Prostate gland (tissue), 2 donors: ENCODE measurements at regions of chr2 and their contacts with region 1.

Region 1: DNA sequence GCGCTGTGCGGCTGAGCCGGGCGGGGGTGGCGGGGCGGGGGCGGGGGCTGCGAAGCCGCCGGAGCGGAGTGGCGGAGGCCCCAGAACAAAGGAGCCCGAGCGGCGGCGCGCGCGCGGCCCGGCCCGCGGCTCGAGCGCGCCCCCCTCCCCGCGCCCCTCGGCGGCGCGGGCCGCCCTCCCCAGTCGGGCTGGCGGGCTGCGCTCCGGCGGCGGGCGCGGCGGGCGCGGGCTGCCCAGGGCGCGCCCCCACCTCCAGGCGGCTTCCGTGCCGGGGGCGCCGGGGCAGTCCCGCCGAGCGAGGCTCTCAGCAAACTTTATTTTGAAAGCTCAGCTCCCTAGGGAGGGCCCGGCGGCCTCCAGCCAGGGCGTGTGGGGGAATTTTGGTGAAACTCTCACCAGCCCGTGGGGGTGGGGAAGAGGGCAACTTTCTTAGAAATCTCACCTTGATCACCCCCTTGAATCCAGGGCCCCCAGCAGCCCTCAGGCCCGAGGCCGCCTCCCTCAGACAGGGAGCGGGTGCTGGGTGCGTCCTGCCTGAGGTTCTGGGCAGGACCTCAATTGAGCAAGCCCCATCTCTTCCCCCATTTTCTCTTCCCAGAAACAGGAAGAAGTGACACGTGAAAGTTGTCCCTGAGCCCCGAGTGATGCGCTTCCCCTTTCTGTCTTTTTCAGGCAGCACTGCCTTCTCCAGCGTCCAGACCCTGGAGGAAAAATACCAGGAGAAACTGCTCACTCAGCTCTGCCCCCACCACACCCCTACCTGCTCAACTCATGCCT is 786 bp downstream of the TET3 start:
- DNase-seq: peak; percentile 22
- H3K4me3 ChIP-seq: peak overlapping the region; percentile 51 to 66
- H3K27ac ChIP-seq: peak overlapping the region; percentile 95 to 97
- H3K4me1 ChIP-seq: peaks cover 25% of the 10 kb centered on the region
- H3K27me3 ChIP-seq: no peaks in the 10 kb centered on the region
- CTCF ChIP-seq: no peak
- POLR2A ChIP-seq: no peak

Region 2: DNA sequence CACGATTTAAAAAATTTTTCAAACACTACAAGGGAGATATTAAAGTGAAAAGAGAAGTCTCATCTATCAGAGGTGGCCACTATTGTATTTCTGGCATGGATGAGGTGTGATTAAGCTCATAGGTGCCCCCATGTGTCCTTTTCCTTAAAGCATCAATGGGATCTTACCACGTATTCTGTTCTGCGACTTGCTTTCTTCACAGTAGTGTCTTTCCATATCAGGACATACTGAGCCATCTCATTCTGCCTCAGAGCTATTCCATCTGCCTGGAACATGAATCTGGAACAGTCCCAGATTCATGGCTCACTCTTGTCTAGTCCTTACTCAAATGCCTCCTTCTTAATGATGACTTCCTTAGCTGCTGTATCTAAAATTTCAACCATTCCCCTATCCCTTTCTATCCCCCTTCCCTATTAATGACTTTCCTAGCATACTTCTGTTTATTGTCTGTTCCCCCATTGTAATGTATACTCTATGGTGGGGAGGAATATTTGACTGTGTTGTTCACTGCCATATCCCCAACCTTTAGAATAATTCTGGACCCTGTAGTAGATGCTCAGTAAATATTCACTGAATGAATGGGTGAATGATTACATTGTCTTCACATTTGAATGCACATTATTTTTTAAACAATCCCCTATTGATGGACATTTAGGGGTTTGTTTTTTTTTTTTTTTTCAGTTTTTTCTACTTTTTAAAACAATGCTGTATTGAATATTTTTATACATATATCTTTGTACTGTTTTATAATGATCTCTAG is 145.7 kb before region 1 on chr2:
- intact Hi-C with region 1: loop called (anchors 5 kb)
- DNase-seq: no peak
- H3K4me3 ChIP-seq: no peak overlapping the region
- H3K27ac ChIP-seq: peak overlapping the region; percentile 55 to 67
- H3K4me1 ChIP-seq: peaks cover 7% of the 10 kb centered on the region
- H3K27me3 ChIP-seq: no peaks in the 10 kb centered on the region
- CTCF ChIP-seq: no peak
- POLR2A ChIP-seq: no peak

Region 3: DNA sequence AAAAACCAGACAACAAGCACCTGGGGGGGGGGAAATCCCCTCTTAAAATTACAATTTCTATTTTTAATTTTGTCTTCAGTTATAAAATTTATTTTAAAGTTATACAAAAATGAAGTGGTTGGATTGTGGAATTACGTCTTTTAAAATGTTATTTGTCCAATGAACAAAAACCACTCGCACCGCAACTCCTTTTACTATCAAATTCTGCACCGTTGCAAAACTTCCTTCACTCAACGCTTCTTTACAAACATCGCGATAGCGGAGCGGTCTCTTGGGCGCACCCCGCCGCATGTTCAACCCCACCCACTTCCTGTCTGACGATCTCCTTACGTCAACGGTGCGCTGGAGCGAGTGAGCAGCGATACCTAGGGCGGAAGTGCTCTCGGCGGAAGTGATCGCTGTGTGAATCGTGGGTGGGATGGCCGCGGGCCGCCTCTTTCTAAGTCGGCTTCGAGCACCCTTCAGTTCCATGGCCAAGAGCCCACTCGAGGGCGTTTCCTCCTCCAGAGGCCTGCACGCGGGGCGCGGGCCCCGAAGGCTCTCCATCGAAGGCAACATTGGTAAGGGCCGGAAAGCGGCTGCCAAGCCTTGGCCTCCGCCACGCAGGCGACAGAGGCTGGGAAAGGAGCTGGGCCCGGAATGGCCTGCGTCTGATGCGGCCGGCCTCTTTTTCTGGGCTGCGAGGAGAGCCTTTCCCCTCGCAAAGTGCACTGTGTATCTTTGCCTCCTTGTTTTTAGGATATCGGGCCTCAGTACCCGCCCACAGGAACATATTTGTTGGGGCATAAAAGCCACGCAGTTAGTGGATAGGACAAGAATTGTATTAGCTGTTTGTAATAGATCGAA is 58.8 kb before region 1 on chr2 and contains the start of gene DGUOK:
- intact Hi-C with region 1: loop called (anchors 5 kb)
- DNase-seq: peak; percentile 98
- H3K4me3 ChIP-seq: peak within 1 kb of the TSS; percentile 61 to 74
- H3K27ac ChIP-seq: peak within 1 kb of the TSS; percentile 89
- H3K4me1 ChIP-seq: peaks cover 14% of the 10 kb centered on the region
- H3K27me3 ChIP-seq: no peaks in the 10 kb centered on the region
- CTCF ChIP-seq: peak in 1 of 4 experiments; percentile 5
- POLR2A ChIP-seq: peak; percentile 95
- total RNA-seq, gene DGUOK: 77.4 to 107 TPM

Region 4: DNA sequence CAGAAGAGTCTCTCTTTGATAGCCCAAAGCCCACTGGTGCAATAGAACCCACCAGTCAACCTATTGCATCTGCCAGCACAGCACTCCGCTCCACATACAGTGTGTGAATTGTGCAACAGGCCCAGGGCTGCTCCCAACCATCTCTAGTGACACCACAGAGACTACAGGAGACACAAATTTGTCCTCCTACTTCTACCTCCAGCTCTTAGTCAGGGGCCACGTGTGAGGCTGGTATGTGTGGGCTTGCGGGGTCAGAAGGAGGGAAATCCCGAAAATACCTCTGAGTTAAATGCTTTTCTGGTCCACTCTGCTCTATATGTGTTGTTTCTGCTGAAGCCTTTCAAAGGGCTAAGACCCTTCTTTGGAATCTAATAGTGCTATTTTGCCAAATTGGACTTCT is 40.8 kb before region 1 on chr2:
- intact Hi-C with region 1: loop called (anchors 5 kb)
- DNase-seq: no peak
- H3K4me3 ChIP-seq: no peak overlapping the region
- H3K27ac ChIP-seq: no peak overlapping the region
- H3K4me1 ChIP-seq: no peaks in the 10 kb centered on the region
- H3K27me3 ChIP-seq: no peaks in the 10 kb centered on the region
- CTCF ChIP-seq: no peak
- POLR2A ChIP-seq: no peak

Region 5: DNA sequence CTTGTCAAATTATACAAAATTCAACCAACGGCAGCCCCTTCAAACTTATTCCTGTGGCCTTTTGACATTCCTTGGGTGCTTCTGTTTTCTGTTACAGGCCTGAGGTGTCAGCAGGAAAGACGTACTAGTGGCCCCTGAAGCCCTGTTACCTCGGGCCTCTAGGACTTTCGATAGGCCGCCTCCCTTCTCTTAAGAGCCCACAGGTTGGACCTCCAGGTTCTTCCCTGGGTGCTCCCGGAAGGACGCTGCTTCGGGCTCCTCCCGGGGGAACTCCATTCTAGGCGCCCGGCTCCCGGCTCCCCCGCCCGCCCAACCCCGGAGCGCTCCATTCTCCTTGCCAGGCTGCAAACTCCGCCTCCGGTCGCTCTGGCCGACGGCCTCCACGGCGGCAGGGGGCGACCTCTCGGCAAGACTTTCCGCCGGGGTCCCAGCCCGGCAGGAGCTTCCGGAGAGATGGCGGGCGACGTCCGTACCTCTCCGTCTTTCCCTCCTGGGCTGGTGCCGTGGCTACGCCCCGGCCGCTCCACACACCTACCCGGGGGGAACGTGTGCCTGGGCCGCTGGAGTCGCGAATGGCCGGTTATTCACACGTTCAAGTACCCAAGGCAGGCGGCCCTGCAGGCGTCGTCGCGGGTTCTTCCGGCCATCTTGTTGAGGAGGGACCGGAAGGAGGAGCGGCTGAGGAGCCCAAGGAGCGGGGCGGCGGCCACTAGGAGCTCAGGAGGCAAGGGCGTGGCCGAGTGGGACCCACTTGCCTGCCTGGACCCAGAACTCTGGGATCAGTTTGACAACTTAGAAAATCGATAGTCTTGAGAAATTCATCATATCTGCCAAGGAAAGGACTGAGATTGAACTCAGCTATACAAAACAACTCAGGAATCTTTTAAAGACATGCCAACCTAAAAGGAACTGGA is 134.7 kb after region 1 on chr2:
- intact Hi-C with region 1: no loop called
- DNase-seq: peak; percentile 72
- H3K4me3 ChIP-seq: peak overlapping the region; percentile 72 to 77
- H3K27ac ChIP-seq: peak overlapping the region; percentile 89 to 95
- H3K4me1 ChIP-seq: no peaks in the 10 kb centered on the region
- H3K27me3 ChIP-seq: no peaks in the 10 kb centered on the region
- CTCF ChIP-seq: peak in 3 of 4 experiments; percentile 69 to 77 (median 69)
- POLR2A ChIP-seq: no peak